OCI-LY7 (cell line): ENCODE measurements at regions of chr20 and their contacts with region 1.

Region 1: DNA sequence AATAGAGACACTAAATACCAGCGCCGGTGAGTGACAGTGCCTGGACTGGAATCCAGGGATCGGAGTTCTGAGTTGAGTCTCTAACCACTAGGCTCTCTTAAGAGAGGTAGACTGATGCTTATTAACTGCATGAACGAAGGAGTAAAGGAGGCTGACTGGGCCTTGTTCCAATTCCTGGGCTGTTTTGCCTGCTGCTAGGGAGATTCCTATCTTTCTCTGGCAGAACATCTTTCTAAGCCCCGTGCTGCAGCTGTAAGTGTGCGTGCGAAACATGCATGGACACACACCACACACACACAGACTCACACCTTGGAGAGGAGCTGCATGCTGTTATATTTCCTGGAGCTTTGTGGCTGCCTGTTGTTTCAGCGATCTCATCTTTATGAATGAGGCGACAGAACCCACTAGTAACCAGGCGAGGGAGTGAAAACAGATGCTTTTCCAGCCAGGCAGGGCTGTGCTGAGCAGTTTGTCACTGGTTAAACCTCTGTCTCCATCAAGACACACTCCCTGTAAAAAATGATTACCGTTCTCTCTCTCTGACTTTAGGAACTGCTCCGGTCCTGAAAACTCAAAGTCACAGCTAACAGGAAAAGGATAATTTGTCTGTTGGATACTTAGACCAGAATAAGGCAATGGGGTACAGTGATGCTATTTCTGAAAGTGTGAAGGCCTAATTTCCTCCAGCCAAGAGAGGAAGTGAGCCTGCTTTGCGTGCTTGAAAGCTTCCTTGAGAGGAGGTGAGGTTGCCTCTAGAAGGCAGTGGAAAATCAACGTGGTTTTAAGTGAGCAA is 157.4 kb upstream of the ZNF217 start:
- DNase-seq: peak; percentile 86
- H3K4me3 ChIP-seq: peak overlapping the region; percentile 27
- H3K27ac ChIP-seq: peak overlapping the region; percentile 73
- H3K4me1 ChIP-seq: peaks cover 56% of the 10 kb centered on the region
- CTCF ChIP-seq: 0 out of 2 replicates have a peak, but pooled peaks have one; percentile 16

Region 2: DNA sequence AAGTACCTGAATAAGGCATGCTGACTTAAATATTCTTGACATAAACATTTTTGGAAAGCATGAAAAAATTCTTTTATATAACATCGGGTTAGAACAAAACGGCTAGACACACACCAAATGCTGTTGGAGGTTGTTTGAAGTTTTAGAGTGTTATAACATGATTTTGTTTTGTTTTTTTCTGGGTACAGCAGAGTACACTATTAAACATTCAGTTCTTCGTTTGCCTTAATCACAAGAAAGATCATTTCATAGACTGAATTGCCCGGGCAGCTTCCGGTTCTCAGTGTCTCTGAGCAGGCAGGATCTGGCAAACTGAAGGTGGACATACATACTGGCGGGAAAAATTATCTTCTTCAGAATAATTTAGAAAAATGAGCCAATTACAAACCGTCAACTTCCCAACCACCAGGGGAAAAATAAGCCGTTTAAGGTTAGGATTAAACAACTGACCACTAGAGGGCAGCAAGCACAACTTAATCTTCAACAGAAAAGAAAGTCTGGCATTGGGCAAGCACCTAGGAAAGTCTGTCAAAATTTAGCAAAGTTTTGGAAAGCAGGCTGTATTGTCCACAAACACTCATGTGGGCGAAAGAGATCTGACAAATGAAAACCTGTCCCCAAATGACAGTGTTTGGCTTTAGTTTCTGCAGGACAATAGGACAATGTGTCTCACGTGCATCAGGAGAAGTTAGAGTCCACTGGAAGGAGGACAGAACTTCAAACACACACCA is 172.4 kb before region 1 on chr20:
- CTCF ChIA-PET with region 1: no interaction called
- POLR2A ChIA-PET with region 1: interaction called, 3 read pairs
- intact Hi-C with region 1: loop called (anchors 5 kb)
- DNase-seq: peak; percentile 93
- H3K4me3 ChIP-seq: peak overlapping the region; percentile 68
- H3K27ac ChIP-seq: peak overlapping the region; percentile 96
- H3K4me1 ChIP-seq: peaks cover 58% of the 10 kb centered on the region
- CTCF ChIP-seq: peak; percentile 97

Region 3: GRCh38 chr20:53611449-53611894 is 139.6 kb before region 1 on chr20:
- CTCF ChIA-PET with region 1: no interaction called
- POLR2A ChIA-PET with region 1: no interaction called
- intact Hi-C with region 1: no loop called
- DNase-seq: peak; percentile 34
- H3K4me3 ChIP-seq: peak overlapping the region; percentile 43
- H3K27ac ChIP-seq: peak overlapping the region; percentile 83
- H3K4me1 ChIP-seq: peaks cover 51% of the 10 kb centered on the region
- CTCF ChIP-seq: no peak

Region 4: DNA sequence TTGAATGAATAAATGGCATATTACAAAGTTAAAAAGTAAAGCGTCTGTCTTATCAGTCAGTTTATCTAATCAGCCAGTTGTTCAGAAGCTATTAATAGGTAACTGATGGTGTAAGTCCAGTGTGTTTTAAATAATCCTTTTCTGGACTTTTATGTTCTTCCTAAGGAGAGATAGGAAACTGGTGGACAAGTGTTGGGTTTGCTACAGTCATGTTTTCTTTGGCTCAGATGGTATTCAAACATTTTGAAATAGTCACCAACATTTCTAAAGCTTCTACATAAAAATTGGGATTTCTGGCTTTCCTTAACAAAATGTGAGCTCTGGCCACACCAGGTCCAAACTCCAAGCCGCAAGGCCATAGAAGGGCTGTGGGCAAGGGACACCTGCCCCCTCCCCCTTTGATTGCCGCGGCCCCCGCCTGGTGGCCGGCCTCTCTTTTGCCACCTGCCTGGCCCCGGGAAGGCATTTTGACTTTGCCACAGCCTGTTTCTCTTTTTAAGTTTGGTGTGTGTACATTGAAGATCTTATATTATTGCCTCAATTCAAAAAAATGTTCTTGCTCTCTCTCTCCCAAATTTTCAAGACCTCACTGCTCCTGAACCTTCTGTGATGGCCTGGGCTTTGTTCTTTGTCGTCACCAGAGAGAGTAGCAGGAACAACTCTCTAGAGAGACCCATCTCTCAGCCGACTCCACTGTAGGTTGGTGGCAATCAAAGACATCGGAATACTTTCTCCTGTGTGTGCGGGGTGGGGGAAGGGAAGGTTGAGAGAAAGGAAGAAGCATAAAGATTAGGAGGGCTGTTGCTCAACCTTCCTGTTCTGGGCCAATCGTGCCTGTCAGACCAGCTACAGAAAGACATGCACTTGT is 73.3 kb before region 1 on chr20:
- CTCF ChIA-PET with region 1: no interaction called
- POLR2A ChIA-PET with region 1: no interaction called
- intact Hi-C with region 1: no loop called
- DNase-seq: no peak
- H3K4me3 ChIP-seq: no peak overlapping the region
- H3K27ac ChIP-seq: no peak overlapping the region
- H3K4me1 ChIP-seq: peaks cover 34% of the 10 kb centered on the region
- CTCF ChIP-seq: no peak